CD4-positive, alpha-beta memory T cell (primary cell): ENCODE measurements at regions of chr4 and their contacts with region 1.

Region 1: DNA sequence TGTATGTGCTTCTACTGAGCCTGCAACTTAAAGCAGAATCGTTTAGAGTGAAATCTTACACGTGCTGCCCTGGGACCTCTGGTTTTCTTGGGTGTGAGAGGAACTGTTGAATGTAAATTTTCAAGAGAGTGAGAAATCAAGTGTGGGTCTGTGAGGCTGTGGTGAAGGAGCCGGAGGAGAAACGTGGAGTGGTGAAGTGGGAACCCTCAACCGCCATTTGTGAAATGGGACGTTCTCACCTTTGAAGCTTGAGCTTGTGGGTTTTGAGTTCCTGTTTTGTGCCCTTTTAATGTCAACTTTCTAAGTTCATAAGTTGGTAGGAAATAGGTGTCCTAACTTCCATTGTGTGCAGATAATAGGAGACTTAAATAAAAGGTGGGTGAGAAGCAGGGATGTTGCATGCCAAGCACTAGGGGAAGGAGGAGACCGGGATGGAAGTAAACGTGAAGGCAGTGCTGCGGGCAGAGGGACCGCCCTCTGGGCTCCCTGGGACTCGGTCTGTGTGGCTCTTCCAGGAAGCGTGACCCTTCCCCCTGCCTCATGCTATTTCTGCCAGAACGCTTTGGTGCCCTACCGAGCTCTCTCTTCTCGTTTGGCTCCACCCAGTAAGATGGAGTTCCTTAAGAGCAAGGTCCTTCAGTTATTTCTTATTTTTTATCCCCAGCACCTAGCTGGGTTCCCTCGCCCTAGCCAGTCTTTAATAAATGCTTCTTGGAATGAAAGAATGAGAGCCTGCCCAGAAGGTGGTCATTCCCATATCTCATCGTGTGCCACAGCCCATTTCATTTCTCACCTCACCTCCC is 56.0 kb downstream of the TMEM131L start:
- DNase-seq: peak; percentile 74 to 78 (median 75)
- H3K4me3 ChIP-seq: peak overlapping the region in 1 of 2 donors; percentile 41
- H3K4me3 Mint-ChIP-seq: peak overlapping the region; percentile 73 to 87 (median 84)
- H3K27ac ChIP-seq: peak overlapping the region; percentile 67
- H3K27ac Mint-ChIP-seq: peak overlapping the region; percentile 69 to 96 (median 92)
- H3K4me1 ChIP-seq: peaks cover 98% of the 10 kb centered on the region
- H3K4me1 Mint-ChIP-seq: peaks cover 78 to 97% (median 89%) of the 10 kb centered on the region in 4 donors
- H3K27me3 ChIP-seq: no peaks in the 10 kb centered on the region
- H3K27me3 Mint-ChIP-seq: no peaks in the 10 kb centered on the region

Region 2: GRCh38 chr4:153204247-153205027 is 317.8 kb before region 1 on chr4 and contains the start of gene TRIM2:
- CTCF ChIA-PET with region 1: no interaction called
- POLR2A ChIA-PET with region 1: no interaction called
- intact Hi-C with region 1: no loop called
- DNase-seq: no peak
- H3K4me3 ChIP-seq: peak within 1 kb of the TSS in 1 of 2 donors; percentile 39
- H3K4me3 Mint-ChIP-seq: peak within 1 kb of the TSS; percentile 73 to 87 (median 82)
- H3K27ac ChIP-seq: peak within 1 kb of the TSS; percentile 37
- H3K27ac Mint-ChIP-seq: peak within 1 kb of the TSS; percentile 68 to 94 (median 89)
- H3K4me1 ChIP-seq: peaks cover 41% of the 10 kb centered on the region
- H3K4me1 Mint-ChIP-seq: peaks cover 23 to 48% (median 37%) of the 10 kb centered on the region in 4 donors
- H3K27me3 ChIP-seq: no peaks in the 10 kb centered on the region
- H3K27me3 Mint-ChIP-seq: no peaks in the 10 kb centered on the region
- total RNA-seq, gene TRIM2: 11.9 to 12.3 TPM

Region 3: DNA sequence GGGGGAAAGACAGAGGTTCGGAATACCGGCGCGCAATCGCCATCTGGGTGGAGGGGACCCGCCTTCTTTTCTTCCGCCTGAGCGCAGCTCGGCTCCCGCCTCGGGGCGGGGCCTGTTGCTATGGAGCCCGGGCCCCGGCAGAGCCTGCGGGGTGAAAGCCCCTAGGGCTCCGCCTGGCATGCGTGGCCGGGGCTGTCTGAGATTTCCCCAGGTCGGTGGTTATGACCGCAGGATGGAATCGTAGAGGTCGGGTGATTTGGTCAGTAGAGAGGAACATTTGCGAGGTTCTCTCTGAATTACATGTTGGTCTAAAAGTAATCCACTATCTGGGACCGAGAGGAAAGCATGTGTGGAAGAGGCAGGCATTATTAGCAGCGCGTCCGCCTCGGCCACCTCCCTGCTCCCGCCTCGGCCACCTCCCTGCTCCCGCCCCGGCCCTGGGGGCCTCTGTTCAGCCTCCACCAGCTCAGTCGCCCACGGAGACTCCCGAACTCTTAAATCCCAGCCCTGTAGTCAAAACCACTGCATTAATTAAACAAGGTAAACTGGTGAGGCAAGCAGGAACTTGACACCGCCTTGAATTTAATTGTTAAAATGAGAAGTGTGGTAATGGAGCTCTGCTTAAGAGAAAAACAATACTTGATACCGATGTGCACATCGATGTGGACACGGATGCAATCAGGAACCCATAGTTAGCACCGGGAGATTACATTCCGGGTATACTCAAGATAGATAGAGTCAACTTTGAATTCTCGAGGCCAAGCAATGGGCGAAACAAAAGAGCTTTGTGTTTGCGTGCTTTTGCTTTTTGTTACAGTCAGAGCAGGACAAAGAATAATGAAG is 272.8 kb before region 1 on chr4:
- CTCF ChIA-PET with region 1: no interaction called
- POLR2A ChIA-PET with region 1: no interaction called
- intact Hi-C with region 1: loop called (anchors 1 kb)
- DNase-seq: peak; percentile 86 to 90 (median 87)
- H3K4me3 ChIP-seq: peak overlapping the region; percentile 63 to 64
- H3K4me3 Mint-ChIP-seq: peak overlapping the region; percentile 89 to 95 (median 94)
- H3K27ac ChIP-seq: peak overlapping the region; percentile 73
- H3K27ac Mint-ChIP-seq: peak overlapping the region; percentile 89 to 97 (median 97)
- H3K4me1 ChIP-seq: peaks cover 17% of the 10 kb centered on the region
- H3K4me1 Mint-ChIP-seq: peaks cover 17 to 43% (median 31%) of the 10 kb centered on the region in 4 donors
- H3K27me3 ChIP-seq: no peaks in the 10 kb centered on the region
- H3K27me3 Mint-ChIP-seq: peaks cover 0 to 2% of the 10 kb centered on the region in 2 donors

Region 4: GRCh38 chr4:153488006-153488891 is 34.0 kb before region 1 on chr4:
- CTCF ChIA-PET with region 1: interaction called, 5 read pairs
- POLR2A ChIA-PET with region 1: interaction called, 236 read pairs
- intact Hi-C with region 1: loop called (anchors 2 kb)
- DNase-seq: peak; percentile 81 to 94 (median 82)
- H3K4me3 ChIP-seq: peak overlapping the region; percentile 25 to 54
- H3K4me3 Mint-ChIP-seq: peak overlapping the region; percentile 78 to 92 (median 88)
- H3K27ac ChIP-seq: peak overlapping the region; percentile 88
- H3K27ac Mint-ChIP-seq: peak overlapping the region; percentile 94 to 99 (median 96)
- H3K4me1 ChIP-seq: peaks cover 90% of the 10 kb centered on the region
- H3K4me1 Mint-ChIP-seq: peaks cover 64 to 87% (median 73%) of the 10 kb centered on the region in 4 donors
- H3K27me3 ChIP-seq: no peaks in the 10 kb centered on the region
- H3K27me3 Mint-ChIP-seq: peaks cover 0 to 2% of the 10 kb centered on the region in 2 donors

Region 5: GRCh38 chr4:153497988-153498967 is 23.9 kb before region 1 on chr4:
- CTCF ChIA-PET with region 1: interaction called, 21 read pairs
- POLR2A ChIA-PET with region 1: interaction called, 236 read pairs
- intact Hi-C with region 1: loop called (anchors 1 kb)
- DNase-seq: no peak
- H3K4me3 ChIP-seq: peak overlapping the region in 1 of 2 donors; percentile 38
- H3K4me3 Mint-ChIP-seq: peak overlapping the region; percentile 57 to 85 (median 80)
- H3K27ac ChIP-seq: peak overlapping the region; percentile 64
- H3K27ac Mint-ChIP-seq: peak overlapping the region; percentile 94 to 99 (median 97)
- H3K4me1 ChIP-seq: peaks cover 98% of the 10 kb centered on the region
- H3K4me1 Mint-ChIP-seq: peaks cover 76 to 100% (median 86%) of the 10 kb centered on the region in 4 donors
- H3K27me3 ChIP-seq: no peaks in the 10 kb centered on the region
- H3K27me3 Mint-ChIP-seq: no peaks in the 10 kb centered on the region

Region 6: DNA sequence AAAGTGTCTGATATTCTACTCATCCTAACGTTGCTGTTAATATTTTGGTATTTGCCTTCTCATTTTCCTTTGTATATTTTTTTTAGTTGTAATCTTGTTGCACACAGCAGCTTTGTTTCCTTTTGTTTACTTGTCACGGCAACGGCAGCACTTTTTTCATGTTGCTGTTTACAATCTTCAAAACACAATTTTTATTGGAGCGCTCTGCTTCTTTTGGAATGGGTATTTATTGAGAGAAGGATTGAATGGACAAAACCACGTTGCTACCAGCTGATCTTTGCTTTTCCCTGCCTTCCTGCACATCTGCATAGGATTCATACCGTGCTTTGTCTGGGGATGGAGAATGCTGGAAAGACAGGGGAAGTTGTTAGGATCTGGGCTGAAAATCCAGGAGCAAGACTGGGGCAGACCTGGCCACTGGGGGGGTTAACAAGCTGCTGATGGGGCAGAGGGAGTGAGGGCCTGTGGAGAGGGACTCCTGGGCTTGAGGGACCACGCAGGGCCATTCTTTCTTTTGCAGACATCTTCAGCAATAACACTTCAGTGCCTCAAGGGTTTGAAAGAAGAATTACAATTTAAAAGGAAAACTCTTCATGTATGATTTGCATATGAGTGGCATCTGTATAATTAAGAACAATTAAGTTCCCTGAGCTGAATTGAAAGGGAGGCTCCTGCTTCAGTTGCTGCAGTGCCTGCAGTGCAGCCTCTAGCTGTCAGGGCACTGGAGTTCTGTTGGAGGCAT is 13.7 kb after region 1 on chr4:
- CTCF ChIA-PET with region 1: interaction called, 5 read pairs
- POLR2A ChIA-PET with region 1: interaction called, 36 read pairs
- intact Hi-C with region 1: loop called (anchors 1 kb)
- DNase-seq: peak in 4 of 5 donors; percentile 26 to 51 (median 33)
- H3K4me3 ChIP-seq: no peak overlapping the region
- H3K4me3 Mint-ChIP-seq: peak overlapping the region; percentile 48 to 90 (median 76)
- H3K27ac ChIP-seq: peak overlapping the region; percentile 23
- H3K27ac Mint-ChIP-seq: peak overlapping the region; percentile 90 to 96 (median 94)
- H3K4me1 ChIP-seq: peaks cover 96% of the 10 kb centered on the region
- H3K4me1 Mint-ChIP-seq: peaks cover 59 to 93% (median 80%) of the 10 kb centered on the region in 4 donors
- H3K27me3 ChIP-seq: no peaks in the 10 kb centered on the region
- H3K27me3 Mint-ChIP-seq: no peaks in the 10 kb centered on the region

Region 7: DNA sequence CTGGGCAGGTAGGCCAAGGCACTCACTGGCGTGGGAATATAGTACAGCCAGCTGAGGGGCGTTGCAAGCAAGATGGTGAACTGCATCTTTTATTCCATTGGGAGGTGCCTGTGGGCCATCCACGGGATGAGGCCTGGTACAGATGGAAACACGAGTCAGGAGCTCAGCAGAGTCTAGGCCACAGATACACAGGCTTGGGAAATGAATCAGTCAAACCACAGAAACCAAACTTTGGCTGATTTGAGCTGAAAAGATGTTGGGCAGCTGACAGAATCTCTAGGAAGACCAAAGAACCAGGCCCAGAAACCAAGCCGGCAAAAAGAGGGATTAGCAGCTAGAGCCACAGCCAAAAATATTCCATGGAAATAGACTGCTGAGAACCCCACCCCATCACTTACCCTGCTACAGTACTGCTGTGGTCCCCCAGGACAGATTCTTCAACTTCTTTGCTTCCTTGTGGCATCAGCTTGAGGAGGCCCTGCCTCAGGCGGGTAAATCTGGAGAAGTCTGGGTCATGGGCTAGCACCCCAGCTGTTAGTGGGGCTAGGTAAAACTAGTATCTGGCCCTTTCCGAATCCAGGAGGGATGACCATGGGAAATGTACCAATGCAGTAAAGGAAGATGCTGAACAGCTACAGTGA is 19.4 kb after region 1 on chr4:
- CTCF ChIA-PET with region 1: interaction called, 5 read pairs
- POLR2A ChIA-PET with region 1: interaction called, 36 read pairs
- intact Hi-C with region 1: loop called (anchors 1 kb)
- DNase-seq: no peak
- H3K4me3 ChIP-seq: no peak overlapping the region
- H3K4me3 Mint-ChIP-seq: peak overlapping the region in 7 of 8 donors; percentile 17 to 77 (median 41)
- H3K27ac ChIP-seq: no peak overlapping the region
- H3K27ac Mint-ChIP-seq: peak overlapping the region; percentile 33 to 87 (median 75)
- H3K4me1 ChIP-seq: peaks cover 78% of the 10 kb centered on the region
- H3K4me1 Mint-ChIP-seq: peaks cover 51 to 87% (median 74%) of the 10 kb centered on the region in 4 donors
- H3K27me3 ChIP-seq: no peaks in the 10 kb centered on the region
- H3K27me3 Mint-ChIP-seq: no peaks in the 10 kb centered on the region